ENCODE measurements at regions of chr1 and their contacts with region 1.

Region 1: DNA sequence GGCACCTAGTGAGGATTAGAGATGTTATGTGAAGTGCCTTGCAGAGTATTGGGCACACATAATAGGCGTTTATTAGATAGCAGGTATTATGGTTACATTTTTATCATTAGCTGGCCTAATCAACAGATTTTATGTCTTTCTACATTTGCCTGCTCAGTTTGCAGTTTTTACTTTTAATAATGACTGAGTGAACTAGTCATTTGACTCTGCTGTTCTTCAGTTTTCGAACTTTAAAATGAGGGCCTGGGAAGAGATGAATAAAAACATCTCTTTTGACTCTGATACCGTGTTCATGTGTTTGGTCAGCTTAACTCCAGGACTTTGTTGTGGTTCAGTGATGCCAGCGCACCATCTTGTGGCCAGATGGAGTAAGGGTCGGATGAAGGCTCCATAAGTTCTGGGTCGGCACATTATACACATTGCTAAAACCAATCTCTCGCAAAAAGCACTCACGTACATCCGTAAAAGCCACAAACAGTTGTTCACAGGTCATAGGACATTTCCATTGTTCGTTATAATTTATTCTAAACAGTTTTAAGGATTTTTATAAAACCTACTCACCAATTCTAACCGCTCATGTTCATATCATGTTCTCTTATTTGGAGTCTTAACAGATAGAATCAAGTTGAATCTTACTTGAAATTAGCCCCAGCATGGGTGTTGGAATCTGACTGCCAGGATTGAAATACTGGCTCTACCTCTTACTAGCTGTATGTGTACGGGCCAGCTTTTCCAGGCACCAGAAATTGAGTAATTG is 78.4 kb upstream of the GPR88 start:
- DNase-seq: peak; percentile 52
- H3K4me3 Mint-ChIP-seq: no peak overlapping the region
- H3K27ac Mint-ChIP-seq: no peak overlapping the region
- H3K4me1 Mint-ChIP-seq: peaks cover 13% of the 10 kb centered on the region
- H3K27me3 Mint-ChIP-seq: no peaks in the 10 kb centered on the region
- CTCF ChIP-seq: peak; percentile 32

Region 2: GRCh38 chr1:99808391-99809115 is 651.0 kb before region 1 on chr1:
- CTCF ChIA-PET with region 1: no interaction called
- intact Hi-C with region 1: loop called (anchors 2 kb)
- DNase-seq: peak; percentile 41
- H3K4me3 Mint-ChIP-seq: no peak overlapping the region
- H3K27ac Mint-ChIP-seq: no peak overlapping the region
- H3K4me1 Mint-ChIP-seq: no peaks in the 10 kb centered on the region
- H3K27me3 Mint-ChIP-seq: no peaks in the 10 kb centered on the region
- CTCF ChIP-seq: peak; percentile 34

Region 3: DNA sequence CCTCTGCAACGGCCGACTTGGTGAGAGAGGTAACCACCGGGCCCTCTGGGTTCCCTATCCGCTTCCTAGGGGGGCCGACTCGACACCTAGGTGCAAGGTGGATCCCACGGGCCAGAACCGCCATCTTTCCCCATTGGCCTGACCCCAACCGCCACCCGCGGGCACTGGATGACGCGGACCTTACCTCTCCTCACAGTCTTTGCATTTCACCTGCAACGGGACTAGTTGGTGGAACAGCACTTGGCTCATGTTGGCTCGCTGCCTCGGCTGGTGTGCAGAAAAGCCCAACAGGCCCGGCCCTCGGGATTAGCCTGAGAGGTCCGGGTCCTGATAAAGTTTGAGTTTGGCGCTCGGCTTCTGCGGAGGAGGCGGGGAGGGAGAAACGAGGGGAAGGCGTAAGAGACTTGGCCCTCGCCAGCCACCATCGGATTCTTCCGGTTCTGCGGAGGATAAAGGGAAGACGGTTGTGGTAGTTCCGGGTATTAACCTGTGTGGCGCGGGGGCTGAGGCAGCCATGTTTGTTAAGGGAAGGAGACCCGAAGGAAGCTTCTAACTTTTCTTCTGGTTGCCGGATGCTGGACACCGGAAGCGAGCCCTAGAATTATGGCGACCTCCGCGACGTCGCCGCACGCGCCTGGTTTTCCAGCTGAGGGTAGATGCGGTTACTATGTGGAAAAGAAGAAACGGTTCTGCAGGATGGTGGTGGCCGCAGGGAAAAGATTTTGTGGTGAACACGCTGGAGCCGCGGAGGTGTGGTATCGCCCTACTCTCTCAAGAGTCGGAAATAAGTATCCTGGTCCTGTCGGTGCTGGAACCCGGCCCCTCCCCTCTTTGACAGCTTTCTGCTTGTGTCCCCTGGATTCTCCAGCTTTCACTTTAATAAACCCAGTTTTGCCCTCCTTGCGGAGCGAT is 326.7 kb before region 1 on chr1 and contains the starts of genes SASS6 and TRMT13:
- CTCF ChIA-PET with region 1: interaction called, 3 read pairs
- intact Hi-C with region 1: loop called (anchors 10 kb)
- DNase-seq: peak; percentile 88
- H3K4me3 Mint-ChIP-seq: peak within 1 kb of the TSS; percentile 93
- H3K27ac Mint-ChIP-seq: peak within 1 kb of the TSS; percentile 62
- H3K4me1 Mint-ChIP-seq: peaks cover 8% of the 10 kb centered on the region
- H3K27me3 Mint-ChIP-seq: no peaks in the 10 kb centered on the region
- CTCF ChIP-seq: no peak
- total RNA-seq, gene SASS6: 8.2 and 8.7 TPM in 2 replicates
- total RNA-seq, gene TRMT13: 18.9 and 21.4 TPM in 2 replicates

Region 4: DNA sequence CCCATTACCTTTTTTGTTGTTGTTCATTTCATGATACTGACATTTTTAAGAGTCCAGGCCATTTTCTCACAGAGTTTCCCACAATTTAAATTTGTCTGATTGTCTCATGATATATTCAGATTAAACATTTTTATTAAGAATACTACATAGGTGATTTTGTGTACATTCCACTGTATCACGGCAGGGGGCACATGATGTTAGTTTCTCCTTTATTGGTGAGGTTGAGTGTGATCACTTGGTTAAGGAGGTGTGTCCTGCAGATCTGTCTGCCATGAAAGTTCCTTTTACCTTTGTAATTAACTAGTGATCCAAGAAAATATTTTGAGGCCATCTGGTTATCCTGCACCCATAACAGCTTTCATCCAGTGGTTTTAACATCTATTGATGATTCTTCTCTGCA is 181.7 kb before region 1 on chr1:
- CTCF ChIA-PET with region 1: no interaction called
- intact Hi-C with region 1: loop called (anchors 1 kb)
- DNase-seq: peak; percentile 22
- H3K4me3 Mint-ChIP-seq: no peak overlapping the region
- H3K27ac Mint-ChIP-seq: no peak overlapping the region
- H3K4me1 Mint-ChIP-seq: no peaks in the 10 kb centered on the region
- H3K27me3 Mint-ChIP-seq: no peaks in the 10 kb centered on the region
- CTCF ChIP-seq: no peak

Region 5: DNA sequence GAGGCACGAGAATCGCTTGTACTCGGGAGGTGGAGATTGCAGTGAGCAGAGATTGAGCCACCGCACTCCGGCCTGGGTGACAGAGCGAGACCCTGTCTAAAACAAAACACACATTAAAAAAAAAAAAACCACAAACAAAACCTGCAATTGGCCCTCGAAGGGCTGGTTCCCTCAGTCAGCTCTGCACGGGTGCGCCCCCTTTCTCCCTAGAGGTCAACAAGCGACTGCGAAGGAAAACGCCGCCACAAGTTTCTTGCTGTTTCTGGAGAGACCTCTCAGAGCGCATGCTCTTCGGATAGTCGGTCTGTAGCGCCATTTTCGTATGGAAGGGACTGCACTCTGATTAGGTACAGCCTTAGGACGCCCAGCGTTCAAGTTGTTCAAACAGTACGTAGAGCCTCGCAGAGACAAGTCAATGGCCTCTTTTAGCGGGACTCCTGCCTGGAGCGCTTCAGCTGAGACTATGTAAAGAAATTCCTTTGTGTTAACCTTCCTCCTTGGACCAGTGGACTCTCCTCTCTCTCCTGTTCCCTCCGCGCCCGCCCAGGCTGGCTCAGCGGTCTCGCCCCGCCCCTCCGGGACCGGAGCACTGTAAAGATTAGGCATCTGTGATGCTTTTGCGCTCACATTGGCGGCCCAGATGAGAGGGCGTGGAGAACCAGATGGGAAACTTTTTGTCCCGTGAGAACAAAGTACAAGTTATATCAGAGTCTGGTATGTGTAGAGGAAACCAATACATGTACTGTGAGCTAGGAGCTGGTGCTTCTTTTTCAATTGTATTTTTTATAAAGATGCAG is 108.2 kb before region 1 on chr1:
- CTCF ChIA-PET with region 1: interaction called, 3 read pairs
- intact Hi-C with region 1: loop called (anchors 5 kb)
- DNase-seq: peak; percentile 84
- H3K4me3 Mint-ChIP-seq: peak overlapping the region; percentile 91
- H3K27ac Mint-ChIP-seq: peak overlapping the region; percentile 92
- H3K4me1 Mint-ChIP-seq: peaks cover 24% of the 10 kb centered on the region
- H3K27me3 Mint-ChIP-seq: no peaks in the 10 kb centered on the region
- CTCF ChIP-seq: peak; percentile 34

Region 6: DNA sequence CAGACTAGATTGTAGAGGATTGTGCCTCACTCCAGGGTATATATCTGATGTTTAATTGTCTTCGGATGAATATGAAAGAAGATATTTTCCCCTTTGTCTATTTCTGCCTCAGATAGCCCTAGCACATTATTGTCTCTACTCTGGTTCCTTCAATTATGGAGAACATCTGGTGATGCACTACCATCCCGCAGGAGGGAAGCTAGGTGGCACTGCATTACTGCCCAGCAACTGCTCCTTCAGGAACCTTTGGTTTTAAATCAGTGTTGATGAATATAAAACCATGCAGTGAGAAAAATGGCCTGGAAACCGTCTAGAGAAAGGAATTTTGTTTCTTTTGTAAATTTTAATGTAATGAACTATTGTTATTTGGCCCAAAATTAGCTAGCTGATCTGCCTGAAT is 146.9 kb after region 1 on chr1:
- CTCF ChIA-PET with region 1: no interaction called
- intact Hi-C with region 1: loop called (anchors 5 kb)
- DNase-seq: peak; percentile 40
- H3K4me3 Mint-ChIP-seq: no peak overlapping the region
- H3K27ac Mint-ChIP-seq: no peak overlapping the region
- H3K4me1 Mint-ChIP-seq: no peaks in the 10 kb centered on the region
- H3K27me3 Mint-ChIP-seq: no peaks in the 10 kb centered on the region
- CTCF ChIP-seq: no peak

Region 7: GRCh38 chr1:100866041-100866900 is 406.7 kb after region 1 on chr1:
- CTCF ChIA-PET with region 1: interaction called, 4 read pairs
- intact Hi-C with region 1: loop called (anchors 2 kb)
- DNase-seq: no peak
- H3K4me3 Mint-ChIP-seq: no peak overlapping the region
- H3K27ac Mint-ChIP-seq: no peak overlapping the region
- H3K4me1 Mint-ChIP-seq: no peaks in the 10 kb centered on the region
- H3K27me3 Mint-ChIP-seq: no peaks in the 10 kb centered on the region
- CTCF ChIP-seq: peak; percentile 19

Measured in Calu3 (cell line).